AG04449 (cell line): ENCODE measurements at regions of chr2 and their contacts with region 1.

Region 1: GRCh38 chr2:217756375-217757107 is 246.3 kb downstream of the TNS1 start:
- DNase-seq: no peak
- H3K4me3 ChIP-seq: peak overlapping the region; percentile 23
- CTCF ChIP-seq: peak; percentile 93

Region 2: DNA sequence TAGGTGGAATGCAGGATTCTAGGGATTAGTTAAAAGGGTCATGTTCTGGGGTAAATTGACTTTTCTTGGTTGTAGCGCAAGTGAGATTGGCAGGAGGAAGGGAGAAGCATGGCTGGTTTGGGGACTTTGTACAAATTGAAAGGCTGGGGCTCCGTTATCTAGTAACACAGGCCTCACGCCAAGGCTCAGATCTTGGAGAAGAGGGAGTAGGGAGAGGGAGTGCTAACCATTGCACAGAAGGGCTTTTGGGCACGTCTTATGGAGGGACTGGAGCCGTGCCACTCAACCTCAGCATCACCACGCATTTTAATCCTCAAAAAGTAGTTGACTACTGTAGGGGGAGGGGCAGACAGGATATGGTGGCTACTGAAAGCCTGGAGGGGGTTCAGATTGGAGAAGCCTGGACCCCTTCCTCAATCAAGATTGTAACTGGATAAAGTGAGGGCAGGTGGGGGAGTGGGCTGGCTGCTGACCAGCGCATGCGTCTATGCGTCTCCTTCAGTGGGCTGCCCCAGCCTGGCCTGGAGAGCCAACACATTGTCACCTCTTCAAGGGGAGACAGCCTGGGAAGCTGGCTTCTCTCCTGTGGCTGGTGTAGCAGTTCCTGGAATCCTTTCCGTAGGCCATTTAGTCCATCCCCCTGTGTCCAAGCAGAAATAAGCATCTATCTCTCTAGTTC is 1075.5 kb before region 1 on chr2:
- CTCF ChIA-PET with region 1: interaction called, 15 read pairs
- POLR2A ChIA-PET with region 1: no interaction called
- DNase-seq: no peak
- H3K4me3 ChIP-seq: no peak overlapping the region
- CTCF ChIP-seq: no peak

Region 3: DNA sequence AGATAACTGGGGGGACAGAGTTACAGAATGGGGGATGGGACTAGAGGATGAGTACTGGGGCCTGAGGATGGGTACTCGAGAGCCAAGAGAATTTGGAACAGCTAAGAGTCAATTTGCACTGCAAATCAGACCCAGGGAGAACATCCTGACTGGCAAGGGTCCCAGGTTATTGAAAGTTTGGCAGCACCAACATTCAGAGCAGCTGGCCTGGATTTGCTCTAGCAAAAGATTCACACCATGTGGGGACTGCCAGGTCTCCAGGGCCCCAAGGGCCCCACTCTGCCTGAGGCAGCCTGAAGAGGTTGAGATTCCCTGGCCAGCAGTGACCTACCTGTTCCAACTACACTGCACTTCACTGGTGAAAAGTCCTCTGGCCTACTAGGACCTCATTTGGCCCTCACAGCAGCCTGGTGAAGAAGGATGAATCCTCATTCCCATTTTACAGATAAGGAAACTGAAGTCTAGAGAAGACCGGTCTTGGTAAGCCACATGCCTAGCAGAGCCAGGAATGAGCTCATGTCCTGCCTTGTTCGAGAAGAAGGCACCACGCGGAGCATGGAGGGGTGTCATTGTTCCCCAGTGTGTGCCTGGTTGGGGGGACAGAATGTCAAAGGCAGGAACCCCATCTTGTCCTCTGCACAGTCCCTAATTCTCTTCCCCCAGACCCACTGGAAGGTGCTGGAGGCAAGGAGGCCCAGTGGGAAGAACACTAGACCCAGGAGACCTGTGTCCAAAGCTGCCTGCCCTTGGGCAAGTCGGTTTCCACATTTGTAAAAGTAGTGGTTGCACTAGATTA is 12.4 kb before region 1 on chr2:
- CTCF ChIA-PET with region 1: interaction called, 16 read pairs
- POLR2A ChIA-PET with region 1: no interaction called
- DNase-seq: no peak
- H3K4me3 ChIP-seq: no peak overlapping the region
- CTCF ChIP-seq: no peak

Region 4: GRCh38 chr2:217806482-217806765 is 49.9 kb after region 1 on chr2:
- CTCF ChIA-PET with region 1: no interaction called
- POLR2A ChIA-PET with region 1: no interaction called
- DNase-seq: no peak
- H3K4me3 ChIP-seq: no peak overlapping the region
- CTCF ChIP-seq: no peak

Region 5: DNA sequence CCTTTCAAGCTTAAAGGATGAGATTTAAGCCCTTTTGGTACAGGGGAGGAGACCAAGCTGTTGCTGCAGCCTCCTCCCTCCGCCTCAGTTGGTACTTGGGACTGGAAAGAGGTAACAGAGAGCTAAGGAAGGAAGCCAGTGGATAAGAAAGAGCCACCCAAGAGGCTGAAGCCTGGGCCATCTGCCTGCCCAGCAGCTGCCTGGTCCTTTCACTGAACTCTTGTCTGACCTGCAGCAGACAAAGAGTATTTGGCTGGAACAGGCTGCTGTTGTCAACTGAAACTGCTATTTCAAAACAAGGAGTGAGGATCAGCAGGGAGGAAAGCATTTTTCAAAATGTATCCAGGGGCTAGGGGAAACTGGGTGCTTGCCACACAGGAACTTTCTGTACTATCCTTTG is 215.9 kb after region 1 on chr2:
- CTCF ChIA-PET with region 1: no interaction called
- POLR2A ChIA-PET with region 1: no interaction called
- DNase-seq: no peak
- H3K4me3 ChIP-seq: no peak overlapping the region
- CTCF ChIP-seq: no peak